ENCODE measurements at regions of chr9 and their contacts with region 1.

Region 1: DNA sequence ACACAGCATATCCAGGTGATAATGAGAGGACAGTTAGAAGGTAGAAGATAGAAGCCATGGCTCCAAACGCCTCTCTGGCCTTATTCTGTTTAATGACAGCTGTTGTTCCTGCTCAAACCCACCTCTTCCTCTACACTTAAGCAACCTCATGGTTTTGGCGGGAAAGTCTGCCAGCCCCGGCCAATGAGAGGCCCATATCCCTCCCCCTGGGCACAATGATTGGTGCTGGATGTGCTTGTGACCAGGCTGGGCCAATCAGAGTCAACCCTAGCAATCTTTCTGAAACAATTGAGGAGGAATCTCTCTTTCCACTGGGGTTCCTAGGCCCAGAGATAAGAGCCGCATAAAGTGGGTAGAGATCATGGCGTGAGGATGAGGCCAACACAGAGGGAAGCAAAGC is 4.8 kb upstream of the GFI1B start:
- DNase-seq: peak in 2 of 14 experiments; percentile 18 to 33
- ATAC-seq: no peak
- H3K4me3 ChIP-seq: no peak overlapping the region
- H3K4me3 Mint-ChIP-seq: no peak overlapping the region
- H3K27ac ChIP-seq: no peak overlapping the region
- H3K27ac Mint-ChIP-seq: no peak overlapping the region
- H3K4me1 ChIP-seq: peaks cover 15% of the 10 kb centered on the region
- H3K4me1 Mint-ChIP-seq: peaks cover 5% of the 10 kb centered on the region
- H3K27me3 ChIP-seq: peaks cover 15 to 27% of the 10 kb centered on the region in 2 experiments
- H3K27me3 Mint-ChIP-seq: peaks cover 50% of the 10 kb centered on the region
- CTCF ChIP-seq: no peak

Region 2: GRCh38 chr9:132507746-132508469 is 465.8 kb before region 1 on chr9:
- CTCF ChIA-PET with region 1: no interaction called
- POLR2A ChIA-PET with region 1: no interaction called
- intact Hi-C with region 1: loop called (anchors 1 to 2 kb)
- DNase-seq: peak; percentile 49 to 80 (median 58)
- ATAC-seq: peak; percentile 63
- H3K4me3 ChIP-seq: no peak overlapping the region
- H3K4me3 Mint-ChIP-seq: no peak overlapping the region
- H3K27ac ChIP-seq: no peak overlapping the region
- H3K27ac Mint-ChIP-seq: no peak overlapping the region
- H3K4me1 ChIP-seq: peaks cover 22% of the 10 kb centered on the region
- H3K4me1 Mint-ChIP-seq: peaks cover 17% of the 10 kb centered on the region
- H3K27me3 ChIP-seq: peaks cover 0 to 4% of the 10 kb centered on the region in 2 experiments
- H3K27me3 Mint-ChIP-seq: peaks cover 4% of the 10 kb centered on the region
- CTCF ChIP-seq: peak; percentile 62

Region 3: GRCh38 chr9:132849185-132849706 is 124.5 kb before region 1 on chr9:
- CTCF ChIA-PET with region 1: no interaction called
- POLR2A ChIA-PET with region 1: no interaction called
- intact Hi-C with region 1: loop called in 1 of 2 experiments (anchors 10 kb)
- DNase-seq: peak in 3 of 14 experiments; percentile 11 to 29 (median 21)
- ATAC-seq: peak; percentile 73
- H3K4me3 ChIP-seq: peak overlapping the region; percentile 32
- H3K4me3 Mint-ChIP-seq: peak overlapping the region; percentile 72
- H3K27ac ChIP-seq: peak overlapping the region in 1 of 2 donors; percentile 24
- H3K27ac Mint-ChIP-seq: peak overlapping the region; percentile 78
- H3K4me1 ChIP-seq: peaks cover 16% of the 10 kb centered on the region
- H3K4me1 Mint-ChIP-seq: peaks cover 21% of the 10 kb centered on the region
- H3K27me3 ChIP-seq: no peaks in the 10 kb centered on the region
- H3K27me3 Mint-ChIP-seq: no peaks in the 10 kb centered on the region
- CTCF ChIP-seq: no peak

Region 4: DNA sequence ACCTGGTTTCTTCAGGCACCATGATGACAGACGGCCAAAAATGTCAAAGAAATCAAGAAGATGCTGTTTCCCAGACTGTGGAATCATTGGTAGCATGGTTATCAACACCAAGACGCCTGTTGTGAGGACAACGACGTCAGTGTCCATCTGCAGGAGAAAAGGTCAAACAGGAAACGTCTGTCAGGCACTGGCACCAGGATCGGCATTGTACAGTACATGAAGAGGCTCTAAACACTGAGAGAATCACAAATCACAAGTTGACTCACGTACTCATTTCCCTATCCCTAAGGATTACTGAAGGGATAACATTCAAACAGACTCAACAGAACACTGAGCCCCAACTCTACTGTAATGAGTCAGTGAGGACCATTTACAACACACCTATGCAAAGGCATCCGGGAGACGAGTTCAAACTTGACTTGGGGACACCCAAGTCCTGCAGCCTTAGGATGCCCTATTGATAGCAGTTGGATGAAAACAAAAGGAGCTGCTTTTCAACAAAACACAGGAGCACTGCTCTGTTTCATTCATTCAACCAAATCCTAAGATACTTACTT is 50.3 kb before region 1 on chr9:
- CTCF ChIA-PET with region 1: no interaction called
- POLR2A ChIA-PET with region 1: no interaction called
- intact Hi-C with region 1: loop called in 1 of 2 experiments (anchors 5 kb)
- DNase-seq: no peak
- ATAC-seq: no peak
- H3K4me3 ChIP-seq: no peak overlapping the region
- H3K4me3 Mint-ChIP-seq: no peak overlapping the region
- H3K27ac ChIP-seq: no peak overlapping the region
- H3K27ac Mint-ChIP-seq: no peak overlapping the region
- H3K4me1 ChIP-seq: no peaks in the 10 kb centered on the region
- H3K4me1 Mint-ChIP-seq: no peaks in the 10 kb centered on the region
- H3K27me3 ChIP-seq: no peaks in the 10 kb centered on the region
- H3K27me3 Mint-ChIP-seq: no peaks in the 10 kb centered on the region
- CTCF ChIP-seq: no peak

Measured in CD4-positive, alpha-beta T cell (primary cell).